B cell (primary cell): ENCODE measurements at regions of chr1 and their contacts with region 1.

Region 1: GRCh38 chr1:151539990-151540981 is at the start of gene TUFT1:
- DNase-seq: peak; percentile 96
- ATAC-seq: peak; percentile 99
- H3K4me3 ChIP-seq: peak within 1 kb of the TSS; percentile 39 to 85 (median 75)
- H3K4me3 Mint-ChIP-seq: peak within 1 kb of the TSS; percentile 98
- H3K27ac ChIP-seq: peak within 1 kb of the TSS; percentile 54 to 61
- H3K27ac Mint-ChIP-seq: peak within 1 kb of the TSS; percentile 89
- H3K4me1 ChIP-seq: peaks cover 15 to 22% of the 10 kb centered on the region in 2 donors
- H3K4me1 Mint-ChIP-seq: peaks cover 19% of the 10 kb centered on the region
- H3K27me3 ChIP-seq: peaks cover 0 to 21% (median 10%) of the 10 kb centered on the region in 4 experiments
- H3K27me3 Mint-ChIP-seq: peaks cover 14% of the 10 kb centered on the region
- CTCF ChIP-seq: no peak
- total RNA-seq, gene TUFT1: 2.2 TPM in 2 replicates

Region 2: GRCh38 chr1:151510957-151511635 is 29.2 kb before region 1 on chr1 and contains the start of gene CGN:
- CTCF ChIA-PET with region 1: interaction called, 3 read pairs
- POLR2A ChIA-PET with region 1: interaction called, 11 read pairs
- intact Hi-C with region 1: loop called (anchors 1 kb)
- DNase-seq: peak; percentile 87
- ATAC-seq: peak; percentile 98
- H3K4me3 ChIP-seq: peak within 1 kb of the TSS; percentile 66 to 85 (median 77)
- H3K4me3 Mint-ChIP-seq: peak within 1 kb of the TSS; percentile 96
- H3K27ac ChIP-seq: no peak within 1 kb of the TSS
- H3K27ac Mint-ChIP-seq: peak within 1 kb of the TSS; percentile 78
- H3K4me1 ChIP-seq: peaks cover 16 to 23% of the 10 kb centered on the region in 2 donors
- H3K4me1 Mint-ChIP-seq: peaks cover 15% of the 10 kb centered on the region
- H3K27me3 ChIP-seq: peaks cover 0 to 12% (median 2%) of the 10 kb centered on the region in 4 experiments
- H3K27me3 Mint-ChIP-seq: no peaks in the 10 kb centered on the region
- CTCF ChIP-seq: no peak
- total RNA-seq, gene CGN: 0.49 and 0.81 TPM in 2 replicates

Region 3: GRCh38 chr1:151611832-151612500 is 71.7 kb after region 1 on chr1 and contains the start of gene SNX27:
- CTCF ChIA-PET with region 1: no interaction called
- POLR2A ChIA-PET with region 1: no interaction called
- intact Hi-C with region 1: loop called (anchors 1 kb)
- DNase-seq: peak; percentile 94
- ATAC-seq: peak; percentile 96
- H3K4me3 ChIP-seq: peak within 1 kb of the TSS; percentile 52 to 94 (median 84)
- H3K4me3 Mint-ChIP-seq: peak within 1 kb of the TSS; percentile 91
- H3K27ac ChIP-seq: peak within 1 kb of the TSS in 1 of 2 donors; percentile 79
- H3K27ac Mint-ChIP-seq: peak within 1 kb of the TSS; percentile 94
- H3K4me1 ChIP-seq: peaks cover 11 to 18% of the 10 kb centered on the region in 2 donors
- H3K4me1 Mint-ChIP-seq: peaks cover 32% of the 10 kb centered on the region
- H3K27me3 ChIP-seq: peaks cover 0 to 3% (median 1%) of the 10 kb centered on the region in 4 experiments
- H3K27me3 Mint-ChIP-seq: peaks cover 5% of the 10 kb centered on the region
- CTCF ChIP-seq: no peak
- total RNA-seq, gene SNX27: 43.2 and 45.6 TPM in 2 replicates

Region 4: GRCh38 chr1:151661751-151662150 is 121.5 kb after region 1 on chr1:
- CTCF ChIA-PET with region 1: no interaction called
- POLR2A ChIA-PET with region 1: interaction called, 11 read pairs
- intact Hi-C with region 1: no loop called
- DNase-seq: no peak
- ATAC-seq: no peak
- H3K4me3 ChIP-seq: no peak overlapping the region
- H3K4me3 Mint-ChIP-seq: no peak overlapping the region
- H3K27ac ChIP-seq: no peak overlapping the region
- H3K27ac Mint-ChIP-seq: no peak overlapping the region
- H3K4me1 ChIP-seq: no peaks in the 10 kb centered on the region
- H3K4me1 Mint-ChIP-seq: peaks cover 4% of the 10 kb centered on the region
- H3K27me3 ChIP-seq: no peaks in the 10 kb centered on the region
- H3K27me3 Mint-ChIP-seq: no peaks in the 10 kb centered on the region
- CTCF ChIP-seq: no peak

Region 5: DNA sequence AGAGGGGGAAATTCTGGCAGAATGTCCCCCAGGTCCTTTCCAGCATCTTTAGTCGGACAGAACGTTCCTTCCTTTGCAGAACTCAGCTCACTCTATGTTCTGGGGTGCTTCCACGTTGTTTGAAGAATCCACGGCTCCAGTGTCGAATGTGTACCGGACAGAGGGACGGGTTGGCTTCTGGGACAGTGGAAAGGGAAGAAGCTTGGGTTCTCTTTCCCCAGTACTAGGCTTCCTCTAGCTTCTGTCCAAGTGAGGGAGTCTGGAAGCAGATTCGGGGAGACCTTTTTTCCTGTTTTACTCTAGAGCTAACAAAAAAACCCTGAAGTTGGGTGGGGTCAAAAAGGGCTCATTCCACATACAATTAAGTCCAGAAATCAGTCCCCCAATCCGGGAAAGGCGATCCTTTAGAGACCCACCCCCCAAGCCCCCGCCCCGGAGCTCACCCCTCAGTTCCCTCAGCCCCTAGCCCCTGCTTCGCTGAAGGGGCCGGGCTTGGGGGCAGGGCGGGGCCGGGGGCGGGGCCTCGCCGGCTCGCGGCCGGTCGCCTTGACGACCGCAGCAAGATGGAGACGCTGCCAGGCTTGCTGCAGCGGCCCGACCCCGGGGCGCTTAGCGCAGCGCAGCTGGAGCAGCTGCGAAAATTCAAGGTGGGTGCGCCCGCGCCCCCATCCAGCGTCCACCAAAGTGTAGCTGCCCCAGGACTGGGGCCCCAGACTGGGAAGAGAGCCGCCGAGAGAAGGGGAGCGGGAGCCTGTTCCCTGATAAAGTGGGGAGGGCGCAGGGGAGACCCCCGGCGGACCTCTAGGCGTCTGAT is 180.9 kb after region 1 on chr1 and contains the start of gene RIIAD1:
- CTCF ChIA-PET with region 1: no interaction called
- POLR2A ChIA-PET with region 1: no interaction called
- intact Hi-C with region 1: loop called (anchors 1 kb)
- DNase-seq: peak; percentile 65
- ATAC-seq: peak; percentile 93
- H3K4me3 ChIP-seq: peak within 1 kb of the TSS; percentile 47 to 68 (median 58)
- H3K4me3 Mint-ChIP-seq: peak within 1 kb of the TSS; percentile 85
- H3K27ac ChIP-seq: peak within 1 kb of the TSS; percentile 38
- H3K27ac Mint-ChIP-seq: peak within 1 kb of the TSS; percentile 12
- H3K4me1 ChIP-seq: peaks cover 20 to 27% of the 10 kb centered on the region in 2 donors
- H3K4me1 Mint-ChIP-seq: peaks cover 27% of the 10 kb centered on the region
- H3K27me3 ChIP-seq: peaks cover 0 to 57% (median 32%) of the 10 kb centered on the region in 4 experiments
- H3K27me3 Mint-ChIP-seq: peaks cover 58% of the 10 kb centered on the region
- CTCF ChIP-seq: no peak
- total RNA-seq, gene RIIAD1: not detected in 2 replicates

Region 6: DNA sequence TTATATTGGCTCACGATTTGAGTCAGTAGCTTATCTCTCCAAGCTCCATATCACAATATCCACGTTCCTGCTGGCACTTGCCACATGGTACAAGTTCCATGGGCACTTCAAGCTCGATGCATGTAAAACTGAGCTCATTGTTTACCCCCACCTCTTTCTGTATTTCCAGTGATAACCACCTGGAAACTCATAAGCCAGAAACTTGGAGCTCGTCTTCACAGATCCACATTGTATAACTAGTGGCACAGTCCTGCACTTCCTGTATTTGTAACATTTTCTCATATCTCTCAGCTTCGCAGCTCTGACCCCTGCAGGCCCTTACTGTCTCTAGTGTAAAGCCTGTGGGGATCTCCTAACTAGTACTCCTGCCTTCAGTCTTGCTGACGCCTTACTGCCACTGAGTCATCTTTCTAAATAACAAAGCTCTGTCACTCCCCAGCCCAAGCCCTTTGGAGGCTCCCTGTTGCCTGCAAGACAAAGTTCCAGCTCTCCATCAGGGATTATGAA is 305.8 kb after region 1 on chr1:
- CTCF ChIA-PET with region 1: no interaction called
- POLR2A ChIA-PET with region 1: no interaction called
- intact Hi-C with region 1: no loop called
- DNase-seq: no peak
- ATAC-seq: no peak
- H3K4me3 ChIP-seq: no peak overlapping the region
- H3K4me3 Mint-ChIP-seq: no peak overlapping the region
- H3K27ac ChIP-seq: no peak overlapping the region
- H3K27ac Mint-ChIP-seq: no peak overlapping the region
- H3K4me1 ChIP-seq: peaks cover 10% of the 10 kb centered on the region in 2 donors
- H3K4me1 Mint-ChIP-seq: peaks cover 13% of the 10 kb centered on the region
- H3K27me3 ChIP-seq: peaks cover 0 to 9% (median 0%) of the 10 kb centered on the region in 4 experiments
- H3K27me3 Mint-ChIP-seq: peaks cover 7% of the 10 kb centered on the region
- CTCF ChIP-seq: no peak